ENCODE measurements at regions of chr2 and their contacts with region 1.

Region 1: GRCh38 chr2:227890495-227891079 is 19.2 kb downstream of the DAW1 start:
- DNase-seq: peak; percentile 4
- ATAC-seq: peak; percentile 88
- H3K4me3 ChIP-seq: no peak overlapping the region
- H3K27ac ChIP-seq: no peak overlapping the region
- H3K4me1 ChIP-seq: no peaks in the 10 kb centered on the region
- H3K27me3 ChIP-seq: 0 out of 4 replicates have a peak, but pooled peaks cover 0 to 2% of the 10 kb centered on the region in 2 experiments
- CTCF ChIP-seq: peak; percentile 33 to 58 (median 47); a peak in 5 of 6 replicates
- EP300 ChIP-seq: no peak
- POLR2A ChIP-seq: no peak
- RAD21 ChIP-seq: peak; percentile 61

Region 2: DNA sequence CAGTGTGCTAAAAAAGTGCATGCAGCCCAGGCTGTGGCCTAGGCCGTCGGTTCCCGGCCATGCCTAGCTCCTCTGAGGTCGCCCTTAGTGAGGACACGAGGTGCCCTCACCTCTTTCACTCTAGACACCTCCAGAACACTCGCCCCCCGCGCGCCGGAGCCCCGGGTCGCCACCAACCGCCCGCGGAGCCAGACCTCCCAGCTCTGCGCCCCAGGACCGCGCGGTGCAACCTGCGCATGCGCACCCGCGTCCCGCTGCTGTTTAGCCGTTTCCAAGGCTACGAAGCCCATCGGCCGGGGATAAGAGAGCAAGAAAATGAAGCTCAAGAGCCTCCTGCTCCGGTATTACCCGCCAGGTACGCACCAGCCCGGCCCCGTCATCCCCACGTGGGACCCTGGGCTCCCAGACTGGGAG is 19.2 kb before region 1 on chr2 and contains the start of gene DAW1:
- CTCF ChIA-PET with region 1: interaction called, 37 read pairs
- POLR2A ChIA-PET with region 1: no interaction called
- RAD21 ChIA-PET with region 1: interaction called, 5 read pairs
- SMC1A ChIA-PET with region 1: no interaction called
- in situ Hi-C with region 1: no loop called
- intact Hi-C with region 1: no loop called
- DNase-seq: no peak
- ATAC-seq: peak; percentile 24; the same call in 1 of the 3 replicates
- H3K4me3 ChIP-seq: no peak within 1 kb of the TSS
- H3K27ac ChIP-seq: no peak within 1 kb of the TSS
- H3K4me1 ChIP-seq: no peaks in the 10 kb centered on the region
- H3K27me3 ChIP-seq: peaks cover 0 to 11% of the 10 kb centered on the region in 2 experiments; a peak in 2 of 4 replicates
- CTCF ChIP-seq: no peak
- EP300 ChIP-seq: no peak
- POLR2A ChIP-seq: no peak
- RAD21 ChIP-seq: no peak
- polyA plus RNA-seq, gene DAW1: 0.04 TPM in 1 of 2 experiments, not detected in the other

Region 3: GRCh38 chr2:227903381-227903780 is 12.8 kb after region 1 on chr2:
- CTCF ChIA-PET with region 1: interaction called, 16 read pairs
- POLR2A ChIA-PET with region 1: no interaction called
- RAD21 ChIA-PET with region 1: interaction called, 5 read pairs
- SMC1A ChIA-PET with region 1: interaction called, 3 read pairs
- in situ Hi-C with region 1: no loop called
- intact Hi-C with region 1: no loop called
- DNase-seq: no peak
- ATAC-seq: no peak
- H3K4me3 ChIP-seq: no peak overlapping the region
- H3K27ac ChIP-seq: no peak overlapping the region
- H3K4me1 ChIP-seq: no peaks in the 10 kb centered on the region
- H3K27me3 ChIP-seq: peaks cover 0 to 2% of the 10 kb centered on the region in 2 experiments; a peak in 2 of 4 replicates
- CTCF ChIP-seq: no peak
- EP300 ChIP-seq: no peak
- POLR2A ChIP-seq: no peak
- RAD21 ChIP-seq: no peak

Region 4: GRCh38 chr2:227939271-227940027 is 48.9 kb after region 1 on chr2:
- CTCF ChIA-PET with region 1: interaction called, 14 read pairs
- POLR2A ChIA-PET with region 1: no interaction called
- RAD21 ChIA-PET with region 1: interaction called, 3 read pairs
- SMC1A ChIA-PET with region 1: interaction called, 4 read pairs
- in situ Hi-C with region 1: no loop called
- intact Hi-C with region 1: no loop called
- DNase-seq: no peak
- ATAC-seq: peak; percentile 90
- H3K4me3 ChIP-seq: no peak overlapping the region
- H3K27ac ChIP-seq: no peak overlapping the region
- H3K4me1 ChIP-seq: no peaks in the 10 kb centered on the region
- H3K27me3 ChIP-seq: no peaks in the 10 kb centered on the region; a peak in 1 of 4 replicates
- CTCF ChIP-seq: peak; percentile 56 to 64 (median 62)
- EP300 ChIP-seq: no peak
- POLR2A ChIP-seq: no peak
- RAD21 ChIP-seq: peak; percentile 56

Region 5: GRCh38 chr2:228023619-228024018 is 133.0 kb after region 1 on chr2:
- CTCF ChIA-PET with region 1: no interaction called
- POLR2A ChIA-PET with region 1: no interaction called
- RAD21 ChIA-PET with region 1: no interaction called
- SMC1A ChIA-PET with region 1: no interaction called
- in situ Hi-C with region 1: no loop called
- intact Hi-C with region 1: loop called (anchors 5 kb)
- DNase-seq: no peak
- ATAC-seq: no peak
- H3K4me3 ChIP-seq: no peak overlapping the region
- H3K27ac ChIP-seq: no peak overlapping the region
- H3K4me1 ChIP-seq: no peaks in the 10 kb centered on the region
- H3K27me3 ChIP-seq: no peaks in the 10 kb centered on the region
- CTCF ChIP-seq: no peak
- EP300 ChIP-seq: no peak
- POLR2A ChIP-seq: no peak
- RAD21 ChIP-seq: no peak

Region 6: DNA sequence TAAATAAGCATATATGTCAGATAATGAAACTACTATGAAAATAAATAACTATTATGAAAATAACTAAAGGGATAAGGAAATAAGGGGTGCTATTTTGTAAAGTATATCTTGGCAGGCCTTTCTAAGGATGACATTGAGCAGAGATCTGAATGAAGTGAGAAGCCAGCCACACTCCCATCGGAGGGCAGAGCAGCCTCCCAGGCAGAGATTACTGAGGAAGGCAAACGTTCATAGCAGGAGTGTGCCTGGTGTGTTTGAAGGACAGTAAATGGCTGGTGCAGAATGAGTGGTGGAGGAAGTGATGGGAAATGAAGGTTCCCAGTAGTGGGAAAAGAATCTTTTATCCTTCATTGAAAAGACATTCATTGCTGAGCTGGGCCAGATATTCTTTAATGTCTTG is 228.4 kb after region 1 on chr2:
- CTCF ChIA-PET with region 1: no interaction called
- POLR2A ChIA-PET with region 1: no interaction called
- RAD21 ChIA-PET with region 1: no interaction called
- SMC1A ChIA-PET with region 1: no interaction called
- in situ Hi-C with region 1: no loop called
- intact Hi-C with region 1: no loop called
- DNase-seq: no peak
- ATAC-seq: no peak
- H3K4me3 ChIP-seq: no peak overlapping the region
- H3K27ac ChIP-seq: no peak overlapping the region
- H3K4me1 ChIP-seq: no peaks in the 10 kb centered on the region
- H3K27me3 ChIP-seq: no peaks in the 10 kb centered on the region
- CTCF ChIP-seq: no peak
- EP300 ChIP-seq: no peak
- POLR2A ChIP-seq: no peak
- RAD21 ChIP-seq: no peak

Region 7: DNA sequence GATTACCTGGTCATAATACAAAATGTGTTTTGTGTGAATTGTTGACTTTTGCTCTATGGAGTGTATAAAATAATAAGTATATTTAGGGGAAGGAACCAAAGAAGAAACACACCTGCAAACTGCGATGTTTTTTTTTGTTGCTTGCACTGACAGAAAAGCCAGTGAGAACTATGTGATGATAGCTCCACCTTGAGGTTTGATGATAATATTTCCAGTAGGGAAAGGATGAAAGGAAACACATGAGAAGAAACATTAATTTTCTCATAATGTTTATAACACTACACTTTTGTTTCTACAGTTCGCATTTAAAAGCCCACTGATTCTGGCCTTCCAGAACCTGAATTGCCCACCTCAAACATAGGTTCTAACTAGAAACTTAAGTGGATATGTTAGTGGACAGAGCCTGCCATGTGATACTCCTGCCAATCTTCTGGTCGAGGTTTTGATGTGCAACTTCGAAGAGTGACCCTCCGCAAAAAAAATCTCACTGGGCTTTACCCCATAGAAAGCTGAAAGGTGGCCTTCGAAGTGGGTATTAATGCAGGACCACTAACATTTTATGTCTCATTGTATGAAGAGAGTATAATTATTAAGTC is 767.3 kb after region 1 on chr2:
- CTCF ChIA-PET with region 1: interaction called, 13 read pairs
- POLR2A ChIA-PET with region 1: no interaction called
- RAD21 ChIA-PET with region 1: no interaction called
- SMC1A ChIA-PET with region 1: interaction called, 5 read pairs
- in situ Hi-C with region 1: no loop called
- intact Hi-C with region 1: loop called (anchors 5 kb)
- DNase-seq: peak; percentile 3
- ATAC-seq: peak; percentile 78
- H3K4me3 ChIP-seq: no peak overlapping the region
- H3K27ac ChIP-seq: no peak overlapping the region
- H3K4me1 ChIP-seq: no peaks in the 10 kb centered on the region
- H3K27me3 ChIP-seq: no peaks in the 10 kb centered on the region
- CTCF ChIP-seq: peak; percentile 26 to 68 (median 43); a peak in 4 of 6 replicates
- EP300 ChIP-seq: no peak
- POLR2A ChIP-seq: no peak
- RAD21 ChIP-seq: peak; percentile 88

Region 8: GRCh38 chr2:229273723-229274338 is 1383.2 kb after region 1 on chr2:
- CTCF ChIA-PET with region 1: interaction called, 15 read pairs
- POLR2A ChIA-PET with region 1: no interaction called
- RAD21 ChIA-PET with region 1: interaction called, 7 read pairs
- SMC1A ChIA-PET with region 1: interaction called, 7 read pairs
- in situ Hi-C with region 1: no loop called
- intact Hi-C with region 1: loop called (anchors 5 kb)
- DNase-seq: peak; percentile 11
- ATAC-seq: peak; percentile 89
- H3K4me3 ChIP-seq: no peak overlapping the region
- H3K27ac ChIP-seq: no peak overlapping the region
- H3K4me1 ChIP-seq: no peaks in the 10 kb centered on the region
- H3K27me3 ChIP-seq: peaks cover 0 to 3% of the 10 kb centered on the region in 2 experiments; a peak in 2 of 4 replicates
- CTCF ChIP-seq: peak; percentile 69 to 77 (median 77)
- EP300 ChIP-seq: no peak
- POLR2A ChIP-seq: no peak
- RAD21 ChIP-seq: peak; percentile 55

Measured in GM12878 (cell line).